Left colon (tissue), 2 donors: ENCODE measurements at regions of chr19 and their contacts with region 1.

Region 1: DNA sequence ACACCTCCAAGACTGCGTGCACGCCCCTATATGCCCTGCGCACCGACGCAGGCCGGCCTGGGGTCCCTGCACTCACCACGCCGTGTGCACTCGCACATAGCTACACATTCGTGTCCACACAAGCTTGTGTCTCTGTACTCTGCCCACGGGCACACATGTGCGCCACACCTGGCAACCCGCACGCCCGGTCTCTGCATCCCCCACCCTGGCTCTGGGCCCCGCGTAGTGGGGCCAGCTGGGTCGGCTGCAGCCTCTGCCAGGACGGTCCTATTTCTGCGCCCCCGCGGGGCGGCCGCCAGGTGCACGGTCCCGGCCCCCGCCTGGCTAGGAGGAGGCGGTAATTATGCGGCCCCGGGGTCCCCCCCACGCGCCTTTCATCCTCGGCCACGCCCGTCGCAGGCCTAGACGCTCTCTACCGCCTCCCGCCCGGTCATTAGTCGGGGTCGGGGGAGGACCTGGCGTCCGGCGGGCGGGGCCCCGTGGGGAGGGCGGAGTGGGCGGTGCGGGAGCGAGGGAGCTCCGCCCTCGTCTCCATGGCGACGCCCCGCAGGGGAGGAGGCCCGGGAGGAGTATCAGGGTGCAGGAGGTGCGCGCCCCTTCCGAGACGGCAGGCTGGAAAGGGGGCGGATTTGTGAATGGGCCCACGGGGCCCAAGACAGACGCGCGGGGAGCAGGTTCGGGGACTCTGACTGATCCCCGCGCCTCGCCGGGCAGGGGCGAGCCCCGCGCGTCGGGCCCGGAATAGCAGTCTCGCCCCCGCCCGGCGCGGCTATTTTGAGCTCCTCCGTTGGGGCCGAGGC is 2.8 kb upstream of the CIRBP start:
- DNase-seq: peak; percentile 93 to 95
- ATAC-seq: peak; percentile 51

Region 2: GRCh38 chr19:1103708-1104310 is 162.5 kb before region 1 on chr19 and contains the start of gene GPX4:
- intact Hi-C with region 1: no loop called
- DNase-seq: peak; percentile 99
- ATAC-seq: peak; percentile 87
- total RNA-seq, gene GPX4: 162 to 176 TPM

Region 3: DNA sequence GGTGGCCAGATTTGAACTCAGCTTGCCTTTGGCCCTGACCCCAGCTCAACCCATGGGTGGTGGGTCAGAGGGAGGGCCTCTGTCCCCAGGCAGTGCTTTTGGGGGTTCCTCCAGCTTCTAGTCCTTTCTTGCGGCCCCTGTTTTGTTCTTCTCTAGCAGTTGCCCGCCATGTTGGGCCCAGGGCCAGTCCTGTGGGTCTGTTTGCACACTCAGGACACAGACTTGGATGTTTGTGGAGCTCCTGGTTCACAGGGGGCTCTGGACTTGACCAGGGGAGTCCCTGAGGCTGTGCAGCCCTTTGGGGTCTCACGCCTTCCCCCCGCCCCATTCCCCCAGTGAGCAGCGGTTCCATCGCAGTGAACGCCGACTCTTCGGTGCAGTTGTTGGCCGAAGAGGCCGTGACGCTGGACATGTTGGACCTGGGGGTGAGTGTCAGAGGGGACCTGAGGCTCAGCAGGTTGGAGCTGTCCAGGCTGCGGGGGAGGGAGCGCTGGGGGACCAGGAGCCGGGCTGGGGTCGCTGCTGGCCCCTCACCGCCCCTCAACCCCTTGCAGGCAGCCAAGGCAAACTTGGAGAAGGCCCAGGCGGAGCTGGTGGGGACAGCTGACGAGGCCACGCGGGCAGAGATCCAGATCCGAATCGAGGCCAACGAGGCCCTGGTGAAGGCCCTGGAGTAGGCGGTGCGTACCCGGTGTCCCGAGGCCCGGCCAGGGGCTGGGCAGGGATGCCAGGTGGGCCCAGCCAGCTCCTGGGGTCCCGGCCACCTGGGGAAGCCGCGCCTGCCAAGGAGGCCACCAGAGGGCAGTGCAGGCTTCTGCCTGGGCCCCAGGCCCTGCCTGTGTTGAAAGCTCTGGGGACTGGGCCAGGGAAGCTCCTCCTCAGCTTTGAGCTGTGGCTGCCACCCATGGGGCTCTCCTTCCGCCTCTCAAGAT is 22.3 kb before region 1 on chr19:
- intact Hi-C with region 1: loop called in 1 of 2 experiments (anchors 2 kb)
- DNase-seq: peak; percentile 88 to 90
- ATAC-seq: peak; percentile 41